Activated T-helper 2 cell treated with anti-CD3 and anti-CD28 coated beads, Interferon-gamma antibody, Interleukin-2, Interleukin-4, amounts not matched to agents 10 μg/mL and 5 μg/mL and 100 μg/mL, durations not matched to agents 14 hours and 24 hours and 36 hours (primary cell): ENCODE measurements at regions of chr5 and their contacts with region 1.

Region 1: GRCh38 chr5:113663880-113664541 is 150.5 kb downstream of the YTHDC2 start:
- DNase-seq: no peak
- H3K4me3 Mint-ChIP-seq: no peak overlapping the region
- H3K27ac Mint-ChIP-seq: no peak overlapping the region
- H3K4me1 Mint-ChIP-seq: no peaks in the 10 kb centered on the region
- H3K27me3 Mint-ChIP-seq: peaks cover 13% of the 10 kb centered on the region

Region 2: GRCh38 chr5:113612060-113612496 is 51.9 kb before region 1 on chr5:
- intact Hi-C with region 1: loop called (anchors 1 kb)
- DNase-seq: no peak
- H3K4me3 Mint-ChIP-seq: no peak overlapping the region
- H3K27ac Mint-ChIP-seq: no peak overlapping the region
- H3K4me1 Mint-ChIP-seq: peaks cover 6% of the 10 kb centered on the region
- H3K27me3 Mint-ChIP-seq: peaks cover 19% of the 10 kb centered on the region

Region 3: DNA sequence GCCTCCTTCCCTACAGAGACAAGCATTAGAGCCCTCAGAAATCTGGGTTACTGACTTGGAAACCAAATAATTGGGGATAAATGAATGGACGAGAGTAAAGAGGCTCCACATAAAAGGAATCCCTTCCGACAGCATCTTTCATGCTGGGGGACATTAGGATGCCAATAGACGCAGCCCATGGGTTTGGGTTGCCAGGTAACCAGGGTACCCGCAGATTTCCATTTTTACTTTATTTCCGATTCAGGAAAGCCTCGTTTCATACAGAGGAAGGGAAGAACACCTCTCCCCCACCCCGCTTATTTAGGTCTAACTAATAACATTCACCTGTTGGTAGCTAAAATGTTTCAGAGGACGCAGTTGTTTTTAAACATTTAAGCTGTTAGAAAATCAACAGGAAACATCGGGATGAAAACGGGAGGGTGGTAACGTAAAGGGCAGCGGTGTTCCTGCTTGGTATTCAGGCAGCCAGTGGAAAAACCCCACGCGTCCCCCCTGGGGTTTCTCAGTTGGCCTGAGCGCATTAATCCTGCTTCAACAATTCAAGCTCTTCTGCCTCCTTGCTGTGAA is 29.0 kb after region 1 on chr5:
- intact Hi-C with region 1: no loop called
- DNase-seq: no peak
- H3K4me3 Mint-ChIP-seq: no peak overlapping the region
- H3K27ac Mint-ChIP-seq: no peak overlapping the region
- H3K4me1 Mint-ChIP-seq: no peaks in the 10 kb centered on the region
- H3K27me3 Mint-ChIP-seq: peaks cover 32% of the 10 kb centered on the region